Activated T-helper 2 cell treated with anti-CD3 and anti-CD28 coated beads, Interferon-gamma antibody, Interleukin-2, Interleukin-4, amounts not matched to agents 10 μg/mL and 5 μg/mL and 100 μg/mL, durations not matched to agents 14 hours and 24 hours and 36 hours (primary cell): ENCODE measurements at regions of chr12 and their contacts with region 1.

Region 1: DNA sequence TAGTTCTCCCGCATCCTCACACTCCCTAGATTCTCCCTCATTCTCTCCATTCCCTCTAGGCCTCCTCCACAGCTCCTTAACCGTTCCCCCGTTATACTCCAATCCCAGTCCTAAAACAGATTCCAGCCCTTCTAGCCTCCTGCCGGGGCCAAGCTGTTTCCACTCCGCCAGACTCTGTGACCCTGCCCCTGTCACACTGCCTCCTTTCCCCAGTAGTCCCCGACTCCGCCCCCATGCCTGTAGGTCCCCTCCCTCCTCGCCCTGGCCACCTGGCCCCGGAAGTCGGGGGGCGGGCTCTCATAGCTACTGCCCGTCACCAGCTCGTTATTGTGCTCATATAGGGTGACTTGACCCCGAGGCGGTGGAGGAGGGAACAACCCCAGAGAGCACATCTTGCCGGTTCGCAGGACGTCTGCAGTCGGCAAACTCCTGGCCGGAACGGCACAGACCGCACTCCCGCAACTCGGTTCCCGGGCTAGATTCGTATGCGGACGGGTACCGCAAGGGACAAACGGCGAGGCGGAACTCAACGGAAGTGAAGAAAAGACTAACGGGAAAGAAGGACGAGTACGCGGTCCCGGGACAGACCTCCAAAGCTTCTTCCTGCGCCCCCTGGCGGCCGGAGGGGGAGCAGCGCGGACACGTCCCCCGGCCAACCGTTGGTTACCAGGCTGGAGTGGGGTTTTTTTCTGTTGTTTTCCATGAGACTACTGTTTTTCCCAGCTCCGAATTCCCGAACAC is at the start of gene AAAS:
- DNase-seq: peak; percentile 96
- H3K4me3 Mint-ChIP-seq: peak within 1 kb of the TSS; percentile 99
- H3K27ac Mint-ChIP-seq: peak within 1 kb of the TSS; percentile 98
- H3K4me1 Mint-ChIP-seq: peaks cover 31% of the 10 kb centered on the region
- H3K27me3 Mint-ChIP-seq: no peaks in the 10 kb centered on the region
- total RNA-seq, gene AAAS: 83.7 and 85.4 TPM in 2 replicates

Region 2: DNA sequence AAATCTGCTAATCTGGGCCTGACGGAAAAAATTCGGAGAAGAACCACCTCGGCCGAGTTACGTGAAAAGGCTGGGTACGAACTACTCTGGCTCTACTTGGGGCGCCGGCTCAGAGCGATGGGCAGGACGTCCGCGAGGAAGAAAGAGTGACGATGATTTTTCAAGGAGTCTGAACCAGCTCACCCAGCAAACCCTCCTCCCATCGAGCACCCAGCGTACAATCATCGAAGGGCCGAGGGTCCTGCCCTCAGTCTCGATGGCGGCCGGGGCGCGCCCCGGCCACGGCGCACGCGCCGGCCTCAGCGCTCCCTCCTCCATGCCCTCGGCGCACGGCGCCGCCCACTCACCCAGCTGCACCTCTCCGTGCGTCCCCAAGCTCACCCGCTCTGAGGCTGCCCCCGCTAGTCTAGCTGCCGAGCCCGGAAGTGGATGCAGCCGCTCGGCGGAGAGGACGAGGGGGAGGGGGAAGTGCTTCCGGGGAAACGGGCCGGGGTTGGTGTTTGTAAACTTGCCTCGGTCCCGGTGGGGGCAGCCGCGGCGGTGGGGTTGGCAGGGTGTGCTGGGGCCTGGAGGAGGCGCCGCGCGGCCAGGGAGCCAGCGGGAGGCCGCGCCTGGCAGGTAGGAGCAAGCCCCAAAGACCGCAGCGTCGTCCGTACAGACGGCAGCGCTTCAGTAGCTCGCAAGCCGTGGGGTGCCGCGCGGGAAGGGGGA is 140.9 kb before region 1 on chr12 and contains the starts of genes CSAD and ZNF740:
- intact Hi-C with region 1: loop called (anchors 1 kb)
- DNase-seq: peak; percentile 97
- H3K4me3 Mint-ChIP-seq: peak within 1 kb of the TSS; percentile 91
- H3K27ac Mint-ChIP-seq: peak within 1 kb of the TSS; percentile 94
- H3K4me1 Mint-ChIP-seq: peaks cover 40% of the 10 kb centered on the region
- H3K27me3 Mint-ChIP-seq: no peaks in the 10 kb centered on the region
- total RNA-seq, gene CSAD: 20.2 TPM in 2 replicates
- total RNA-seq, gene ZNF740: 44.9 and 45.5 TPM in 2 replicates

Region 3: DNA sequence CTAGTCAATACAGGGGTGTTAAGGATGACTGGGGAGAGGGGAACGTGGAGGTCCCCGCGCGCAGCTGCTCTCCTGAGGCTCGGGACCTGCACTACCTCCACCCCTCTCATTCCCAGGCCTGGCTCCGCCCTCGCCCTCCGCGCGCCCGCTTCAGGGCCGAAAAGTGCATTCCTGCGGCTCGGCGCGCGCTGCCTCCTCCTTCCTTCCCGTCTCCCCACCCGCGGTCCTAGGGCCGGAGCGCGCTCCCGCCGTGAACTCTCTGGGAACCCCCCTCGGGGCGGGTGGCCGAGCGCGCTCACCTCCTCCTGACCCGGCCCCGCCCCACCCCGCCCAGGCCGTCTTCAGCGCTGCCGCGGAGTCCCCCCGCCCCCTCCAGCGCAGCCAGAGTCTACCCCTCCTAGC is 100.4 kb before region 1 on chr12:
- intact Hi-C with region 1: loop called (anchors 1 kb)
- DNase-seq: peak; percentile 84
- H3K4me3 Mint-ChIP-seq: peak overlapping the region; percentile 96
- H3K27ac Mint-ChIP-seq: peak overlapping the region; percentile 99
- H3K4me1 Mint-ChIP-seq: peaks cover 71% of the 10 kb centered on the region
- H3K27me3 Mint-ChIP-seq: no peaks in the 10 kb centered on the region

Region 4: DNA sequence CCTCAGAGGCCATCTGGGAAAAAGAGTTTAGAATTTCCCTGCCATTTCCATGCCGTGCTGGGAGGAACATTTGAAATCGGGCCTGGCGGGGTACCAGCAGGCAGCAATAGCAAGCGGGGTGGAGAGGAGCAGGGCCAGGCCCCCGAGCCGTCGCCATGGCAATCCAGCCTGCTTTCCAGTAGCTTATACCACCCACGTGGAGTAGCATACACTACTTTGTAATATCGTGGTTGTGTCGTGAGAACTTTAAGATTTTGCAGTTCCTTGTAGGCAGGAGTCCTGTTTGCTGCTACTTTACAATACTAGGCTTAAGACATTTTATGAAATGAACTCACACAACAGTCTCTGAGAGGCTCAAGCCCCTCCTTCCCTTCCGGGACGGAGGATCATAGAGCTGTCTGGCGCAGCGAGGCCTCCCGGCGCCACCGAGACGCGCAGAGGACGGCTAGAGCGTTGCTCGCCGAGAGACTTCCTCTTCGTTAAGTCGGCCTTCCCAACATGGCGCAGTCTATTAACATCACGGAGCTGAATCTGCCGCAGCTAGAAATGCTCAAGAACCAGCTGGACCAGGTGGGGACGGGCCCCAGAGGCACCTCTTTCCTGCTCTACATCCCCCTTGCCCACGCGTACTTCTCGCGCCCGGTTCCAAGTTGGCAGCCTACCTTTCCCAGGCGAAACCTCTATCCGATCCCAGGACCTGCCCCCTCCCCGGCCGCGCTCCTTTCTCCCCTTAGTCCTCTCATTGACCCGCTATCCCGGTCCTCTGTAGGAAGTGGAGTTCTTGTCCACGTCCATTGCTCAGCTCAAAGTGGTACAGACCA is 26.0 kb before region 1 on chr12 and contains the start of gene PFDN5:
- intact Hi-C with region 1: loop called (anchors 1 kb)
- DNase-seq: peak; percentile 86
- H3K4me3 Mint-ChIP-seq: peak within 1 kb of the TSS; percentile 98
- H3K27ac Mint-ChIP-seq: peak within 1 kb of the TSS; percentile 92
- H3K4me1 Mint-ChIP-seq: peaks cover 40% of the 10 kb centered on the region
- H3K27me3 Mint-ChIP-seq: no peaks in the 10 kb centered on the region
- total RNA-seq, gene PFDN5: 321 and 326 TPM in 2 replicates

Region 5: GRCh38 chr12:53379389-53380103 is 58.3 kb after region 1 on chr12:
- intact Hi-C with region 1: loop called (anchors 2 kb)
- DNase-seq: peak; percentile 98
- H3K4me3 Mint-ChIP-seq: no peak overlapping the region
- H3K27ac Mint-ChIP-seq: no peak overlapping the region
- H3K4me1 Mint-ChIP-seq: peaks cover 35% of the 10 kb centered on the region
- H3K27me3 Mint-ChIP-seq: no peaks in the 10 kb centered on the region

Region 6: GRCh38 chr12:53500776-53501614 is 179.8 kb after region 1 on chr12 and contains the start of gene TARBP2:
- intact Hi-C with region 1: loop called (anchors 1 kb)
- DNase-seq: peak; percentile 94
- H3K4me3 Mint-ChIP-seq: peak within 1 kb of the TSS; percentile 90
- H3K27ac Mint-ChIP-seq: peak within 1 kb of the TSS; percentile 98
- H3K4me1 Mint-ChIP-seq: peaks cover 27% of the 10 kb centered on the region
- H3K27me3 Mint-ChIP-seq: no peaks in the 10 kb centered on the region
- total RNA-seq, gene TARBP2: 43.9 and 47.0 TPM in 2 replicates